ENCODE measurements at regions of chr9 and their contacts with region 1.

Region 1: GRCh38 chr9:95268681-95269080 is 48.8 kb downstream of the FANCC start:
- DNase-seq: peak; percentile 11
- H3K4me3 ChIP-seq: no peak overlapping the region
- H3K27ac ChIP-seq: no peak overlapping the region
- H3K4me1 ChIP-seq: no peaks in the 10 kb centered on the region
- H3K27me3 ChIP-seq: no peaks in the 10 kb centered on the region
- CTCF ChIP-seq: peak in 3 of 4 experiments; percentile 15 to 44 (median 34)
- POLR2A ChIP-seq: no peak

Region 2: GRCh38 chr9:95206143-95206542 is 62.5 kb before region 1 on chr9:
- intact Hi-C with region 1: no loop called
- DNase-seq: no peak
- H3K4me3 ChIP-seq: no peak overlapping the region
- H3K27ac ChIP-seq: no peak overlapping the region
- H3K4me1 ChIP-seq: no peaks in the 10 kb centered on the region
- H3K27me3 ChIP-seq: no peaks in the 10 kb centered on the region
- CTCF ChIP-seq: no peak
- POLR2A ChIP-seq: no peak

Region 3: GRCh38 chr9:96317335-96317980 is 1048.8 kb after region 1 on chr9:
- intact Hi-C with region 1: loop called (anchors 10 kb)
- DNase-seq: peak; percentile 32
- H3K4me3 ChIP-seq: no peak overlapping the region
- H3K27ac ChIP-seq: no peak overlapping the region
- H3K4me1 ChIP-seq: no peaks in the 10 kb centered on the region
- H3K27me3 ChIP-seq: no peaks in the 10 kb centered on the region
- CTCF ChIP-seq: peak; percentile 73 to 91 (median 76)
- POLR2A ChIP-seq: no peak